Psoas muscle (tissue), 8 donors: ENCODE measurements at regions of chr19 and their contacts with region 1.

Region 1: GRCh38 chr19:2750808-2751443 is 11.1 kb upstream of the SLC39A3 start:
- DNase-seq: no peak
- ATAC-seq: no peak
- H3K4me3 ChIP-seq: no peak overlapping the region
- H3K27ac ChIP-seq: no peak overlapping the region
- H3K4me1 ChIP-seq: no peaks in the 10 kb centered on the region
- H3K27me3 ChIP-seq: no peaks in the 10 kb centered on the region
- CTCF ChIP-seq: no peak

Region 2: GRCh38 chr19:2648528-2648937 is 102.4 kb before region 1 on chr19:
- intact Hi-C with region 1: loop called (anchors 2 to 5 kb)
- DNase-seq: peak; percentile 73 to 78
- ATAC-seq: peak; percentile 82 to 94 (median 90)
- H3K4me3 ChIP-seq: no peak overlapping the region
- H3K27ac ChIP-seq: no peak overlapping the region
- H3K4me1 ChIP-seq: no peaks in the 10 kb centered on the region
- H3K27me3 ChIP-seq: no peaks in the 10 kb centered on the region
- CTCF ChIP-seq: peak; percentile 71

Region 3: DNA sequence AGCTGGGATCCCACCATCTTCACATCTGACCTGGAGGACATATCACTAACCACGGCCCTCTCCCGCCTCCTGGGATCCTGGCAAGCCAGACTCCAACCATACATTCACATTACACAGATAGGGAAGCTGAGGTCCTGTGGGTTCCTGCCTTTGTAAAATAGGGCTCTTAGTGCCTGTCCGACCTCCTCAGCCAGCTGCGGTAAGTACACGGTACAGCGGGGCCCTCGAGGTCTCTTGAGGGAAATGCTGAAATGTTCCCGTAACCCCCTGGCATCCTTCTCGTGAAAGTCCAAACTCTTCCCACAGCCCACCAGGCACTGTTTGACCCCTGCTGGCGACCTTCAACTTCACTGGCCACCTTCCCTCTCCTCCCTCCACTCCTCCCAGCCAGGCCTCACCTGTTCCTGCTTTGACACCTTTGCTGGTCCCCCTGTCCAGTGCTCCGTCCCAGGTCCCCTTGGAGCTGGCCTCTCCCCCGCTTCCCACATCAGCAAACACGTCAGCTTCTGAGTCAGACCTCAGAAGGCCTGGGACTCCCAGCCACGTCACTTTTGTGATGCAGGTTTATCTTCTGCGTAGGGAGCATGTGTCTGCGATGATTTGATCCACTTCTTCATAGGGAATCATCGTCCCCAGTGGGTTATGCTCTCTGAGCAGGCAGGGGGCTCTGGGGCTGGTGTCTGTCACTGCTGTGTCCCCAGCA is 39.6 kb before region 1 on chr19:
- intact Hi-C with region 1: no loop called
- DNase-seq: no peak
- ATAC-seq: no peak
- H3K4me3 ChIP-seq: no peak overlapping the region
- H3K27ac ChIP-seq: no peak overlapping the region
- H3K4me1 ChIP-seq: no peaks in the 10 kb centered on the region
- H3K27me3 ChIP-seq: peaks cover 0 to 13% (median 6%) of the 10 kb centered on the region in 3 donors
- CTCF ChIP-seq: no peak

Region 4: GRCh38 chr19:2722541-2723344 is 28.2 kb before region 1 on chr19:
- intact Hi-C with region 1: no loop called
- DNase-seq: peak; percentile 69 to 81
- ATAC-seq: peak; percentile 87 to 97 (median 96)
- H3K4me3 ChIP-seq: no peak overlapping the region
- H3K27ac ChIP-seq: no peak overlapping the region
- H3K4me1 ChIP-seq: no peaks in the 10 kb centered on the region
- H3K27me3 ChIP-seq: peaks cover 0 to 77% (median 23%) of the 10 kb centered on the region in 3 donors
- CTCF ChIP-seq: no peak